ENCODE measurements at regions of chr6 and their contacts with region 1.

Region 1: DNA sequence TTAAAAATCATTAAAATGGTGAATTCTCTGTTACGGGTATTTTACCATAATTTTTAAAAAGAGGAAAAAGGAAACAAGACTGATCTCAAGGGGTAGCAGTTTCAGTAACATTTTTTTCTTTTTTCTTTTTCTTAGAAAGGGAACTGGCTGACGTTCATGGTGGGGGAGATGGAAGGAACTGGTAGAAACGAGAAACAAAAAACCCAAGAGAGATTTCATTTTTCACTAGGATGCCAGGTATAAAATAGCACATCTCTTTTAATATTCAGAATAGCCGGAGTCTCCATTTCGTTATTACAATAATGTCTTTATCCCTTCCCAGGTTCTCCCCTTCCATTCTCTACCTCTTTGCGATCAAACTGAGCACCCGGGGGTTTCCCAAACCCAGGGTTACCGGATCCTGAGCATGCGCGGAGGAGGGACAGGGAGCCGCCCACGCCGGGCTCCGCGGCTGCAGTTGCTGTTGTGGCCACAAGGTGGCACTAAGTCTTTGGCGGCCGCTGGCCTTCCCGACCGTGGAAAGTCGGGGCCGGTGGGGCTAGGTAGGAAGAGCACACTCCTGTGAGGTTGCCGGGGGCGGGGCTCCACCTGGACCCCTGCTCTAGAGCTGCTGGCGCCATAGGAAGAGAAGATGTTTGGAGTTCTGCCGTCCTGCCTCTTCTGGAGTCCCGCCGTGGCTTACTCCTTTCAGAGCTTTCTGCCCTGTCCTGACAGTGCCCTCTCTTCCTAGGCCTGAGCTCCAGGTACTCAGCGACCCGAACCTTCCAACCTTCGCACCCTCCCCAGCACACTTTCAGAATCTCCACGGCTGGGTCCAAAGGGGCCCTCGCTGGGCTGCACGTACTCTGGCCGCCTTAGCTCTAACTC is 146.8 kb downstream of the SH3BGRL2 start:
- DNase-seq: peak; percentile 85
- H3K4me3 Mint-ChIP-seq: peak overlapping the region; percentile 67
- H3K27ac Mint-ChIP-seq: peak overlapping the region; percentile 21
- H3K4me1 Mint-ChIP-seq: peaks cover 10% of the 10 kb centered on the region
- H3K27me3 Mint-ChIP-seq: no peaks in the 10 kb centered on the region

Region 2: DNA sequence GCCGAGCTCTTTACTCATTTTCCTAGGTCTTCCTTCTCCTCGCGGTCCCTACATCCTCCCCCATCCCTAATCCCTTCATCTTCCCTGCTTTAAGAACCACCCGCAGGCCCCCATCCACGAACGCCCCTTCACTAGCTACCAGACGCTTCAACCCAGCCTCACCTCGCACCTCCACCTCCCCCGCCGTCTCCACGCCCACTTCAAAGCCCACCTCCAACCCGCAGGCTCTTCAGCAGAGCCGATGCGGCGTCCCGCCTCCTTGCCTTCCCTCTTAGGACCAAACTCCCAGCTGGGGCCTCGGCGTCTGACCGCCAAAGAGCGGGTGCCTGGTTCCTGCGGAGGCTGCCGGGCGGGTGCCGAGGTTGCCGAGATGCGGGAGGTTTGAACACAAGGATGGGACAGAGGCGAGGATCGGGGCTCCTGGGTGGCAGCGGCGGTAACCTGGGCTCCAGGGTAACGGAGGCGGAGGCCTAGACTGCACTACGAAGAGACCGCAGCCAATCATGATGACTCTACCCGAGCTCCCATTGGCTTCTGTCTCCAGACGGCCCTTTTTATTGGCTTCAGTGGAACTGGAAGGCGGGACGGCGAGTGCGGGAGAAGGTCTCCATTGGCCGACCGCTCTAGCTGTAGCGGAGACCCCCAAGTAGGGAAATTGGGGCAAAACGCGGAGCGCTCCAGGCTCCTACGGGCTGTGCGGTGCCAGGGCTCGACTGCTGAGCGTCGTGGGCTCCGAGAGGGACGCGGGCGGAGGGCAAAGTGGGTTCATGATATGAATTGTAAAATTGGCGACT is 240.8 kb before region 1 on chr6 and contains the start of gene LCA5:
- intact Hi-C with region 1: loop called (anchors 1 kb)
- DNase-seq: peak; percentile 81
- H3K4me3 Mint-ChIP-seq: no peak within 1 kb of the TSS
- H3K27ac Mint-ChIP-seq: no peak within 1 kb of the TSS
- H3K4me1 Mint-ChIP-seq: no peaks in the 10 kb centered on the region
- H3K27me3 Mint-ChIP-seq: peaks cover 17% of the 10 kb centered on the region
- total RNA-seq, gene LCA5: 0.08 and 0.17 TPM in 2 replicates

Region 3: DNA sequence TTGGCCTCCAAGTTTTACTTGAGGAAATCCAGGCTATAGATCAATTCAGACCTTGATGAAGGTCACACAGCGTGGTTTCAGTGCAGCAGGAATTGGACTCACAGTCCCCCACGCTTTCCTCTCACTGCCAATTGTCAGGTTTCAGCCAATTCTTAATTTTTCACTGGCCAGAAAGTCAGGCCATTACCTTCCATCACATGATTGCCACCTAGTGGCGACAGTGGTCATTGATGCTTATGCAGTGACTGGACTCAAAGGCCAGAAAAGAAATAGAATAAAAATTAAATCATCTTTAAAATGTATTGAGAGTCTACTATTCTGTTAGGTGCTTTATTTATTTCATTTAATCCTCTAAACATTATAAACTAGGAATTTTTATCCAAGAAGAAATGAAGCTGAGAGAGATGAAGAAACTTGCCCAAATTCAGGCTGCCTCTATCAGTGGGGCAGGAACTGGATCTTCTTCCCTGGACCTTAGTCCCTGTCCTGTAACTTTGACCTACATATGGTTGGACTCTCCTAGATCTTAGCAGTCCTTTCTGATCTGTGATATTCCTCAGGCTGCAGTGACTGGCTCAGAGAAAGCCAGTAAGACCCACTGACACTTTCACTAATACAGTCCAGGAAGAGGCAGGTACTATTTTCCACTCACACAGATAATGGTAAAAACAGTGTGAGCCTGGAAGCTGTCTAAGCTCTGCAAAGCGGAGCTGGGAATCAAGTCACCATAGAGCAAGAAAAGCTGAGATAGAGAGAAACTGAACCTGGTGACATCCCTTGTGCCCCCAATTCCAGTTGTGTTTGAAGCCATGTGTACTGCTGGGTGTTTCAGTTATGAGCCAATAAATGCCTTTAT is 36.1 kb after region 1 on chr6:
- intact Hi-C with region 1: loop called (anchors 1 kb)
- DNase-seq: peak; percentile 37
- H3K4me3 Mint-ChIP-seq: no peak overlapping the region
- H3K27ac Mint-ChIP-seq: no peak overlapping the region
- H3K4me1 Mint-ChIP-seq: no peaks in the 10 kb centered on the region
- H3K27me3 Mint-ChIP-seq: peaks cover 8% of the 10 kb centered on the region

Region 4: DNA sequence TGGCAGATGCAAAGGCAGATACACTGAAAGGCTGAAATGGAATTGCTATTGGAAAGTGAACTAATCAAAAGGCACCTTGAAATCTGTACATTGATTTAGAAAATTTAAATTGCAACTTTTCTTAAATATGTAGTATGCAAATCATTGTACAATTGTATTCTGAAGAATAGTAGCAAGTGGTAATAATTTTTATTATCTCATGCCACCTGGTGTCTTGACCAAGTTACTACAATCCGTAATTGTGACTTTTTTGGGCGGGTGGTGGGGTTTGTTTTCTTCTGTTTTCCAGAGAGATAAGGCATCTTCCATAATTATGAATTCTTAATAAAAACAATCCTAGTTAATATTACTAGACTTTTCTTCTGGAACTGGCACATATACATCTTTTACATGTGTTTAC is 316.1 kb after region 1 on chr6:
- intact Hi-C with region 1: loop called (anchors 1 kb)
- DNase-seq: no peak
- H3K4me3 Mint-ChIP-seq: no peak overlapping the region
- H3K27ac Mint-ChIP-seq: no peak overlapping the region
- H3K4me1 Mint-ChIP-seq: peaks cover 9% of the 10 kb centered on the region
- H3K27me3 Mint-ChIP-seq: peaks cover 12% of the 10 kb centered on the region

Region 5: GRCh38 chr6:80151635-80152034 is 373.7 kb after region 1 on chr6:
- intact Hi-C with region 1: no loop called
- DNase-seq: no peak
- H3K4me3 Mint-ChIP-seq: no peak overlapping the region
- H3K27ac Mint-ChIP-seq: no peak overlapping the region
- H3K4me1 Mint-ChIP-seq: no peaks in the 10 kb centered on the region
- H3K27me3 Mint-ChIP-seq: no peaks in the 10 kb centered on the region

Region 6: GRCh38 chr6:80174900-80175572 is 397.1 kb after region 1 on chr6:
- intact Hi-C with region 1: no loop called
- DNase-seq: no peak
- H3K4me3 Mint-ChIP-seq: no peak overlapping the region
- H3K27ac Mint-ChIP-seq: no peak overlapping the region
- H3K4me1 Mint-ChIP-seq: no peaks in the 10 kb centered on the region
- H3K27me3 Mint-ChIP-seq: no peaks in the 10 kb centered on the region